Calu3 (cell line): ENCODE measurements at regions of chr1 and their contacts with region 1.

Region 1: GRCh38 chr1:21439721-21440629 is at the start of gene NBPF3:
- DNase-seq: peak; percentile 78
- H3K4me3 Mint-ChIP-seq: peak within 1 kb of the TSS; percentile 96
- H3K27ac Mint-ChIP-seq: peak within 1 kb of the TSS; percentile 73
- H3K4me1 Mint-ChIP-seq: no peaks in the 10 kb centered on the region
- H3K27me3 Mint-ChIP-seq: no peaks in the 10 kb centered on the region
- CTCF ChIP-seq: no peak
- total RNA-seq, gene NBPF3: 6.7 and 6.9 TPM in 2 replicates

Region 2: GRCh38 chr1:21270086-21270689 is 169.8 kb before region 1 on chr1:
- CTCF ChIA-PET with region 1: no interaction called
- intact Hi-C with region 1: no loop called
- DNase-seq: peak; percentile 65
- H3K4me3 Mint-ChIP-seq: no peak overlapping the region
- H3K27ac Mint-ChIP-seq: no peak overlapping the region
- H3K4me1 Mint-ChIP-seq: peaks cover 10% of the 10 kb centered on the region
- H3K27me3 Mint-ChIP-seq: no peaks in the 10 kb centered on the region
- CTCF ChIP-seq: peak; percentile 51

Region 3: GRCh38 chr1:21669258-21670058 is 229.5 kb after region 1 on chr1 and contains the start of gene RAP1GAP:
- CTCF ChIA-PET with region 1: no interaction called
- intact Hi-C with region 1: loop called (anchors 5 kb)
- DNase-seq: no peak
- H3K4me3 Mint-ChIP-seq: peak within 1 kb of the TSS; percentile 56
- H3K27ac Mint-ChIP-seq: no peak within 1 kb of the TSS
- H3K4me1 Mint-ChIP-seq: peaks cover 7% of the 10 kb centered on the region
- H3K27me3 Mint-ChIP-seq: no peaks in the 10 kb centered on the region
- CTCF ChIP-seq: no peak
- total RNA-seq, gene RAP1GAP: 23.8 and 26.8 TPM in 2 replicates